ENCODE measurements at regions of chr19 and their contacts with region 1.

Region 1: DNA sequence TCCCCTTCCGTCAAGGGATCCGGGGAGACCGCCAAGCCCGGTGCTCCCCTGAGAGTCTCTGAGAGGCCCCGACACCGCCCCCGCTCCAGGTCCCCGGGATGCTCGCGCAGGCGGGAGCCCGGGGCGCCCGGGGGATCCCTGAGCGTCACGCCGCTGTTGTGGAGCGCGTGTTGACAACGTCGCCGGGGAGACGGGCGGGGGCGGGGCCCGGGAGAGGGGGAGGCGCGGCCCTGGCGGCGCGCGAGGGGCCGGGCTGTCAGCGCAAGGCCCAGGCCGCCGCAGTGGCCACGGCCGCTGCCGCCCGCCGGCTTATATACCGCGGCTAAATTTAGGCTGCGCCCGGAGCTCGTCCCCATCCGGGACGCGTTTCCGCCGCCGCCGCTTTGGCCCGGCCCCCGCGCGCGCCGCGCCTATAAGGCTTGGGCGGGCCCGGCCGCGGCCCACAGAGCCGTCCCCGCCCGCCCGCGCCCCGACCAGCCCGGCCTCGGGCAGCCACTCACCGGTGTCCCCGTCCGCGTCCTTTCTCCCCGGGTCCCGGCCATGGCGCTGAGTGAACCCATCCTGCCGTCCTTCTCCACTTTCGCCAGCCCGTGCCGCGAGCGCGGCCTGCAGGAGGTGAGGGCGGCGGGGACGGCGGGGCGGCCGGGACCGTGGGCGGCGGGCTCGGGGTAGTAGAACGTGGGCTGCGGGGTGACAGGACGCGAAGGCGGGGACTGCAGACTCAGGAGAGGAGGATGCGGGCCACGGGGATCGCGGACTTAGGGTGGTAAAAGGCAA is at the start of gene KLF2:
- DNase-seq: peak; percentile 96
- ATAC-seq: peak; percentile 73
- total RNA-seq, gene KLF2: 105 TPM

Region 2: GRCh38 chr19:16259385-16260159 is 65.0 kb before region 1 on chr19:
- intact Hi-C with region 1: loop called (anchors 10 kb)
- DNase-seq: no peak
- ATAC-seq: peak; percentile 28